ENCODE measurements at regions of chr11 and their contacts with region 1.

Region 1: GRCh38 chr11:36289226-36289852 is at the start of gene COMMD9:
- DNase-seq: peak; percentile 88 to 93
- H3K4me3 ChIP-seq: peak within 1 kb of the TSS; percentile 80 to 92 (median 88)
- H3K27ac ChIP-seq: no peak within 1 kb of the TSS
- H3K4me1 ChIP-seq: peaks cover 0 to 3% (median 0%) of the 10 kb centered on the region in 4 experiments; a peak in 4 of 7 replicates
- H3K27me3 ChIP-seq: peaks cover 0 to 5% (median 0%) of the 10 kb centered on the region in 4 experiments; a peak in 1 of 7 replicates
- CTCF ChIP-seq: no peak
- EP300 ChIP-seq: peak in 1 of 2 experiments; percentile 64; a peak in 1 of 3 replicates
- POLR2A ChIP-seq: peak; percentile 50 to 88
- RAD21 ChIP-seq: no peak
- total RNA-seq, gene COMMD9: 43.3 and 49.1 TPM in 2 replicates

Region 2: GRCh38 chr11:36278531-36279282 is 10.6 kb before region 1 on chr11:
- CTCF ChIA-PET with region 1: interaction called, 14 read pairs
- POLR2A ChIA-PET with region 1: interaction called, 4 read pairs
- DNase-seq: no peak
- H3K4me3 ChIP-seq: no peak overlapping the region
- H3K27ac ChIP-seq: no peak overlapping the region
- H3K4me1 ChIP-seq: no peaks in the 10 kb centered on the region
- H3K27me3 ChIP-seq: no peaks in the 10 kb centered on the region
- CTCF ChIP-seq: peak; percentile 33 to 38 (median 36)
- EP300 ChIP-seq: no peak
- POLR2A ChIP-seq: no peak
- RAD21 ChIP-seq: peak in 1 of 2 experiments; percentile 40; a peak in 2 of 4 replicates

Region 3: DNA sequence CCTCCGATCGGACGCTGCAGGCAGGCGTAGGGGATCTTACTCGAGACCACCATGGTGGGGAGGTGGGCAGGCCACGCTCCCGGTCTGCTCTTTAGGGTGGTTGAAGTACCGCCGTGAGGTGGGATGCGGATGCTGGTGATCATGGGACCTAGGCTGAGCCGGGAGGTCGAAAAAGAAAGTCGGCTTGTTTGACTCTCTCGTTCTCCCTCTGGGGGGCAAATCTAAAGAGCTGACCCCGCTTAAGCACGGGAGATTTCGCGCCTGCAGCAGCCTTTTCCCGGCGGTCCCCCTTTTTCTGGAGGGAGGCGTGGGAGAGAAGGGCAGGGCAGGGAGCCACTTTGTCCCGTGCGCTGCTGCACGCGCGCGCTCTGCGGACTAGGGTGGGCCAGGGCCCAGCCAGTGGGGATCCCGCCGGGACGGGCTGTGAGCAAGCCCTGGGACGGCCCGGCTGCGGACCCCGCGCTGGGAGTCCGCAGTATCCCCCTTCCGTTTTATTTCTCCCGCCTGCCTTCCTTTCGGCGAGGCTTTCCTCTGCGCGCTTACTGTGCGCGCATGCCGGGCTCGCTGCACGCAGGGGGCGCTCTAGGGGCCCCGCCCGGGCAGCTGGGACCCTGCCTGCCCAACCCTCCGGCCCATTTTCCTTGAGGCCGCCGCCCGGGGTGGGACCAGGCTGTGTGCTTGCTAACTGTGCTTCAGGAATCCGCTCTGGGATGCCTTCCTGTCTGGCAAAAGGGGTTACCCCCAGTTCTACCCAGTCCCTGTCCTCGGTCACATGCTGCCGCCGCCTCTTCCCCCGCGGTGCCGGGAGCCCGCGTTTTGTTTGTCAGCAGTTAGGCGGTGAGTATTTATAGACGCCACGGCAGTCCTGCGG is 87.8 kb after region 1 on chr11:
- CTCF ChIA-PET with region 1: interaction called, 20 read pairs
- POLR2A ChIA-PET with region 1: no interaction called
- DNase-seq: peak; percentile 56 to 86
- H3K4me3 ChIP-seq: peak overlapping the region; percentile 81 to 98 (median 84)
- H3K27ac ChIP-seq: no peak overlapping the region
- H3K4me1 ChIP-seq: peaks cover 0 to 3% (median 1%) of the 10 kb centered on the region in 4 experiments; a peak in 1 of 7 replicates
- H3K27me3 ChIP-seq: peaks cover 4 to 23% (median 17%) of the 10 kb centered on the region in 4 experiments
- CTCF ChIP-seq: peak; percentile 56 to 58 (median 57)
- EP300 ChIP-seq: no peak
- POLR2A ChIP-seq: peak in 1 of 2 experiments; percentile 18; a peak in 1 of 3 replicates
- RAD21 ChIP-seq: peak; percentile 26 to 47

Region 4: GRCh38 chr11:36450110-36450572 is 160.8 kb after region 1 on chr11:
- CTCF ChIA-PET with region 1: interaction called, 24 read pairs
- POLR2A ChIA-PET with region 1: interaction called, 3 read pairs
- DNase-seq: no peak
- H3K4me3 ChIP-seq: no peak overlapping the region
- H3K27ac ChIP-seq: no peak overlapping the region
- H3K4me1 ChIP-seq: peaks cover 0 to 13% (median 8%) of the 10 kb centered on the region in 4 experiments; a peak in 6 of 7 replicates
- H3K27me3 ChIP-seq: no peaks in the 10 kb centered on the region
- CTCF ChIP-seq: no peak
- EP300 ChIP-seq: no peak
- POLR2A ChIP-seq: no peak
- RAD21 ChIP-seq: no peak

Region 5: DNA sequence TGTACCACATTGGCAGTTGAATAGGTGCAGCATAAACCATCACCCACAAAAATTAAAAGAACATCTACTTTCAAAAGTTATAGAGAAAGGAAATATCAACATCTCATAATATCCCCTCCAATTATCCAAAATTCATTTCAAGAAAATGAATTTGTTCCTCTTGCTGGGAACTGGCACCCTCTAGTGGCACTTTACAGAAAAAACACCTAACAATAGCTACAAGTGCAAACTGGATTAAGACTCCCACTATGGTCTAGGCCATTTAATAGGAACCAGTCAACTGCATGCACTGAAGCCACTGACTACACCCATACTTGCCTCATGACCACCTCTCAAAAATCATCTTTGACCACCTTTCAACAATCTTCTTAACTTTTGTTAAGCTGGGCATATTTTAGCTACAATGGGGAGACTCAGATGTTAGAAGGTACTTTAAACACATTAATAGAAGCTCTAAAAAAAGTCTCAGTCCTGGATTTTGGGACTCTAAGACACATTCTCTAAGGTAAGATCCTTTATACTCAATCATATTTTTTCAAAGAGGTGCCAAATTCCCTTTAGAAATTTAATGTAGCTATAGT is 203.5 kb after region 1 on chr11:
- CTCF ChIA-PET with region 1: interaction called, 51 read pairs
- POLR2A ChIA-PET with region 1: no interaction called
- DNase-seq: no peak
- H3K4me3 ChIP-seq: no peak overlapping the region
- H3K27ac ChIP-seq: no peak overlapping the region
- H3K4me1 ChIP-seq: no peaks in the 10 kb centered on the region
- H3K27me3 ChIP-seq: no peaks in the 10 kb centered on the region
- CTCF ChIP-seq: peak in 2 of 3 experiments; percentile 49 to 74; a peak in 2 of 4 replicates
- EP300 ChIP-seq: no peak
- POLR2A ChIP-seq: no peak
- RAD21 ChIP-seq: peak; percentile 75 to 76

Measured in H1 (cell line).